ENCODE measurements at regions of chr1 and their contacts with region 1.

Region 1: GRCh38 chr1:21334214-21335087 is 44.2 kb upstream of the ECE1 start:
- DNase-seq: peak; percentile 78
- CTCF ChIP-seq: peak; percentile 79

Region 2: GRCh38 chr1:21344750-21345443 is 10.4 kb after region 1 on chr1:
- CTCF ChIA-PET with region 1: interaction called, 25 read pairs
- POLR2A ChIA-PET with region 1: interaction called, 6 read pairs
- DNase-seq: no peak
- CTCF ChIP-seq: no peak

Measured in GM10248 (cell line).